Activated CD4-positive, alpha-beta T cell treated with anti-CD3 and anti-CD28 coated beads for 36 hours (primary cell): ENCODE measurements at regions of chr3 and their contacts with region 1.

Region 1: DNA sequence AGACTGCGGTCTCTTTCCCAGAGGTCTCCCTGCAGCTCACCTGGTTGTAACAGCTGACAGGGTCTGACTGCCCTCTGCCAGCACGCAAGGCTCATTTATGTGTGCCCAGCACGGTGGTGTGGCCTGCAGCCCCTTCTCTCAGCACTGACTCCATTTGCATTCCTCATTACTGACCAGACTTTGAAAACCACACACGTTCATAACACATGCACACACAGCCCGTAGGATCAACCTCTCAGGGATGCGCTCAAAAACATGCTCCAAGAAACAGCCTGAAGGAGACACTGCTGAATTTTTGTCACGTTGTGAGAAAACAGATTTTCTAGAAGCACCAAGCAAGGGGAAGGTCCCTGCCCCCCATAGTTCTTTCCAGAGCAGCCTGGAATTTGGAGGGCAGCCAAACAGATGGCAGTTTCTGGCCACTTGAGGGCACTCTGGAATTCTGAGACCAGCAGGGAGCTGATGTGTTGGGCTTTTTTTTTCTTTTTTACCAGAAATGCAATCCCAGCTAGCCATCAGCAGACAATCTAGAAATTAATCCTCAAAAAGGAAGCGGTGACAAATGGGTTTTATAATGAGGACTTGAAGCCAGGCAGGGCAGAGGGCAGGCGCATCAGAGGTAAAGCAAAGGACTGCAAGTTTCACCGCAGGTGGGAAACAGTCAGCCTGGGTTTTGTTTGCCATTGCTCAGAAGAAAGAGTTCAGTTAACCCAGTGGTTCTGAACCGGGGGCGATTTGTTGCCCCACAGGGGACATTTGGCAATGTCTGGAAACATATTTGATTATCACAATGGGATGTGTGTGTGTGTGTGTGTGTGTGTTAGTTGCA is 170.5 kb upstream of the PROK2 start:
- DNase-seq: peak; percentile 72
- ATAC-seq: peak; percentile 80
- H3K4me3 Mint-ChIP-seq: no peak overlapping the region
- H3K27ac Mint-ChIP-seq: peak overlapping the region; percentile 55
- H3K4me1 Mint-ChIP-seq: peaks cover 35% of the 10 kb centered on the region
- H3K27me3 Mint-ChIP-seq: peaks cover 2% of the 10 kb centered on the region

Region 2: DNA sequence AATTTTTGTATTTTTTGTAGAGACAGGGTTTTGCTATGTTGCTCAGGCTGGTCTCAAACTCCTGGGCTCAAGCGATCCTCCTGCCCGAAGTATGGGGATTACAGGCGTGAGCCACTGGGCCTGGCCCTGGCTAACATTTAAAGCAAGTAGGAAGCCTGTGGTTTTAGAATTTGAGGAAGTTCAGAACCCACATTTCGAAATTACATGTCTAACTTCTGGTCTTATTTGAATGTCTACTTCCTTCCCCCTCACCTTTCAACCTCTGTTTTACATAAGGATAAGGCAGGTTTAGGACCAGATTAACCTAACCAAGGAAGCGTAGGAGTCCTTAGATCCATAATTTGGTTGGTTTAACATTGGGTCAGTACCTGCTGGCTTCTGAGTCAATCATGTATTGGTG is 50.0 kb before region 1 on chr3:
- CTCF ChIA-PET with region 1: no interaction called
- POLR2A ChIA-PET with region 1: no interaction called
- intact Hi-C with region 1: no loop called
- DNase-seq: no peak
- ATAC-seq: no peak
- H3K4me3 Mint-ChIP-seq: no peak overlapping the region
- H3K27ac Mint-ChIP-seq: no peak overlapping the region
- H3K4me1 Mint-ChIP-seq: peaks cover 6% of the 10 kb centered on the region
- H3K27me3 Mint-ChIP-seq: peaks cover 3% of the 10 kb centered on the region

Region 3: GRCh38 chr3:72270072-72270681 is 314.7 kb after region 1 on chr3:
- CTCF ChIA-PET with region 1: no interaction called
- POLR2A ChIA-PET with region 1: no interaction called
- intact Hi-C with region 1: loop called in 1 of 2 experiments (anchors 10 kb)
- DNase-seq: peak; percentile 38
- ATAC-seq: peak; percentile 59
- H3K4me3 Mint-ChIP-seq: no peak overlapping the region
- H3K27ac Mint-ChIP-seq: peak overlapping the region; percentile 69
- H3K4me1 Mint-ChIP-seq: peaks cover 68% of the 10 kb centered on the region
- H3K27me3 Mint-ChIP-seq: peaks cover 3% of the 10 kb centered on the region